Endothelial cell of umbilical vein (primary cell): ENCODE measurements at regions of chr2 and their contacts with region 1.

Region 1: GRCh38 chr2:154402218-154402617 is 296.3 kb upstream of the KCNJ3 start:
- DNase-seq: peak; percentile 33
- H3K4me3 ChIP-seq: no peak overlapping the region
- H3K27ac ChIP-seq: no peak overlapping the region
- H3K4me1 ChIP-seq: no peaks in the 10 kb centered on the region
- H3K27me3 ChIP-seq: no peaks in the 10 kb centered on the region
- CTCF ChIP-seq: peak in 1 of 2 donors; percentile 30
- POLR2A ChIP-seq: no peak

Region 2: GRCh38 chr2:154338352-154338967 is 63.8 kb before region 1 on chr2:
- CTCF ChIA-PET with region 1: no interaction called
- POLR2A ChIA-PET with region 1: no interaction called
- dilution Hi-C with region 1: no loop called
- intact Hi-C with region 1: no loop called
- DNase-seq: no peak
- H3K4me3 ChIP-seq: no peak overlapping the region
- H3K27ac ChIP-seq: no peak overlapping the region
- H3K4me1 ChIP-seq: no peaks in the 10 kb centered on the region
- H3K27me3 ChIP-seq: no peaks in the 10 kb centered on the region
- CTCF ChIP-seq: no peak
- POLR2A ChIP-seq: no peak

Region 3: DNA sequence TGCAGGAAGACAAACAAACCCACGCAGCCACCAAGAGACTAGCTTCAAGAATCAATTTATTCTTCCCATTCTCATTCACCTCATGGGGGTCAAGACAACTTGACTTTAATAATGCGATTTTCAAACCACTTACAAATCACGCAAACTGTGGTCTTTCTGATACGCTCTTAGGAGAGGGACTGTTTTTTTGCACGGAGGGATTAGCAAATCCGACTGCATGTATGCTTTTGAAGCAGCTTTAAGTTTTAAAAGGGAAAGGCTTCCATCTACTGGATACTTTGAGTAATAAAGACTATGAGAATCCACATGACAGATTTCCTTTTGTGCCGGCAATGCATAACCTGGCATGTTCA is 26.7 kb before region 1 on chr2:
- CTCF ChIA-PET with region 1: no interaction called
- POLR2A ChIA-PET with region 1: no interaction called
- dilution Hi-C with region 1: no loop called
- intact Hi-C with region 1: no loop called
- DNase-seq: peak; percentile 46
- H3K4me3 ChIP-seq: no peak overlapping the region
- H3K27ac ChIP-seq: no peak overlapping the region
- H3K4me1 ChIP-seq: no peaks in the 10 kb centered on the region
- H3K27me3 ChIP-seq: no peaks in the 10 kb centered on the region
- CTCF ChIP-seq: peak in 1 of 2 donors; percentile 16
- POLR2A ChIP-seq: no peak

Region 4: GRCh38 chr2:155223781-155224406 is 821.7 kb after region 1 on chr2:
- CTCF ChIA-PET with region 1: no interaction called
- POLR2A ChIA-PET with region 1: no interaction called
- dilution Hi-C with region 1: no loop called
- intact Hi-C with region 1: loop called (anchors 2 kb)
- DNase-seq: peak; percentile 37
- H3K4me3 ChIP-seq: no peak overlapping the region
- H3K27ac ChIP-seq: no peak overlapping the region
- H3K4me1 ChIP-seq: no peaks in the 10 kb centered on the region
- H3K27me3 ChIP-seq: no peaks in the 10 kb centered on the region
- CTCF ChIP-seq: peak; percentile 6 to 10
- POLR2A ChIP-seq: no peak

Region 5: DNA sequence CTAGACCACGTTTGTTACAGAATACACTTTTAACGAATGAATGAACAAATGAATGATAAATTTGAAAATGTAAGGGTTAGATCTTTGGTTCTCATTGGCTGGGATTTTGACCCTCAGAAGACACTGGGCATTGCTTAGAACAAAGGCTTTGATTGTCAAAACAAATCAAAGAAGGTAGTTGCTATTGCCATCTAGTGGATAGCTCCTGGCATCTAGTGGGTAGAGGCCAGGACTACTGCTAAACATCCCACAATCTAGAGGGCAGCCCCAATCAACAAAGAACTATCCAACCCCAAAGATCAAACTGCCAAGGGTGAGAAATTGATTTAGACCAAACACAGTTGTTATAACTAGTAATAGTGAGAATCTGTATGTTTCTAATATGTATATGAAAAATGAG is 848.6 kb after region 1 on chr2:
- CTCF ChIA-PET with region 1: interaction called, 3 read pairs
- POLR2A ChIA-PET with region 1: no interaction called
- dilution Hi-C with region 1: no loop called
- intact Hi-C with region 1: loop called (anchors 2 kb)
- DNase-seq: peak; percentile 17
- H3K4me3 ChIP-seq: no peak overlapping the region
- H3K27ac ChIP-seq: no peak overlapping the region
- H3K4me1 ChIP-seq: no peaks in the 10 kb centered on the region
- H3K27me3 ChIP-seq: no peaks in the 10 kb centered on the region
- CTCF ChIP-seq: peak; percentile 25 to 30
- POLR2A ChIP-seq: no peak